ENCODE measurements at regions of chr2 and their contacts with region 1.

Region 1: DNA sequence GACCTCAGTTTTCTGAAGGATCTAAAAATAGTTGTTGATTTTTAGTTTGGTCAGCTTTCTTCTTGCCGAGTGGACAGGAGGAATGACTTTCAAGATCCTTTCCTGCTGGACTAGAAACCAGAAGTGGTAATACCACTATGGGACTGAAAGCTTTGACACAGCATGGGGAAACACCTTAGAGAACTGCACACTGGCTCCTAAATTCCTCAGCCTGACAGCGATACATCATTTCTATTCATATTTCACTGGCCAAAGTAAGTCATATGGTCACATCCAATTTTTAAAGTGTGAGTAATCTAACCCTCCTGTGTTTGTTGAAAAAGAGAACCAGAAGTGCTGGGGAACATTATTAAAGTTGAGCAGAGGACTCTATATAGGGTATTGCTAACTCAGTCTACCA is 244.7 kb upstream of the MMADHC start:
- DNase-seq: peak; percentile 39
- H3K4me3 ChIP-seq: no peak overlapping the region
- H3K27ac ChIP-seq: no peak overlapping the region
- H3K4me1 ChIP-seq: no peaks in the 10 kb centered on the region
- H3K27me3 ChIP-seq: no peaks in the 10 kb centered on the region
- CTCF ChIP-seq: no peak

Region 2: DNA sequence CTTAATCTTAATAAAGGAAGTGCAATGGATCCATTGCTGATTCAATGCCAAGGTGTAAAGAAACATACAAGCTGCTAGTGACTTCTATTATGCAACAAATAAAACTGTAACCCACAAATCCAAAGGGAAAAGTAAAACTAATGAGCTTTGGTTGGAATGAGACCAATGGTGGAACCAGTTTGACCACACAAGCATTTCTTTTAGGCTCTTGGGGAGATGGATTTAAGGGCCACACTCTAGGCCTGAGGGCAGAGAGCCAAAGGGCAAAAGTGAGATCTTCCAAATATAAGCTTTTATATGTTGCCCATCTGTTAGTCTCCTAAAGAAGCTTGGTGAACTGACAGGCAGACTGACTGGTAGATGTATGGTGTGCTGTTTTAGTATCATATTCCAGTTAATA is 203.3 kb before region 1 on chr2:
- CTCF ChIA-PET with region 1: no interaction called
- dilution Hi-C with region 1: loop called (anchors 10 kb)
- in situ Hi-C with region 1: no loop called
- intact Hi-C with region 1: no loop called
- DNase-seq: no peak
- H3K4me3 ChIP-seq: no peak overlapping the region
- H3K27ac ChIP-seq: no peak overlapping the region
- H3K4me1 ChIP-seq: no peaks in the 10 kb centered on the region
- H3K27me3 ChIP-seq: no peaks in the 10 kb centered on the region
- CTCF ChIP-seq: no peak

Region 3: DNA sequence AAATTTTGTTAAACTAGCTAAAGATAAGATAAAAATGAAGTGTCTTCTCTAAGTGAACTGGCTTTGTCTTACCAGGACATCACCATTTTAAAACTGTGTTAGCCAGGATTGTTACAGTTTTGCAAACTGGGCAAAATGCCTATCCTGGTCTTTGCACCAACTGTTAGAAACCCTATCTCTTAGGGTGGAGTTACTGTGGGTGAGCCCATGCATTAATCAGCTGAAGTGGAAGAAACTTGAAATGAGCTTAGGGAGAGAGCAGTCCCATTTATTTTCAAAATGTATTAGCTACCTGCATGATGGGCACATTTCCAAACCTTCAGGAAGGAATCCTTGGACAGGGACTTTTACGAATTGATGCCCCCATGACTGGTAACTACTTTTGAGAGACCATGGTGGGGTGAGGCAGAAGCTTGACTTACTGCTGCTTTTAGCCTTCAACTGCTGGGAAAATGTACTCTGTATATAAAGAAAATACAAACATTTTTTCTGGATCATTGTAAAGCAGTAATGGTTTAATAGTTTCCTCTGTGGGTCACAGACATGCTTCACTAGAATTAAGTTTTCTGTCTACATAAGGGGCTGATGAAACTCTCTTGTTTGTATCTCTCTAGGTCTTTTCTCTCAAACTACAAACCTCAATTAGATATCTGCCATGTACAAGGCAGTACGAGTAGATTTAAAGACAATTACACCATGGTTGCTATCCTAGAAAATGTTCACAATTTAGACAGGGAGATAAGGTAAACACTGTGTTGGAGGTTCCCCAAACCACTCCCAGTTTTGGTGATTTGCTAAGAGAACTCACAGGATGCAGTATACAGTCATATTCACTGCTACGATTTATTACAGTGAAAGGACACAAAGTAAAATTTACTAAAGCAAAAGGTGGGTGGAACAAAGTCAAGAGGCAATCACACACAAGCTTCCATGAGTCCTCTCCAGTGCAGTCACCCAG is 76.7 kb after region 1 on chr2:
- CTCF ChIA-PET with region 1: no interaction called
- dilution Hi-C with region 1: no loop called
- in situ Hi-C with region 1: no loop called
- intact Hi-C with region 1: loop called (anchors 10 kb)
- DNase-seq: no peak
- H3K4me3 ChIP-seq: no peak overlapping the region
- H3K27ac ChIP-seq: no peak overlapping the region
- H3K4me1 ChIP-seq: no peaks in the 10 kb centered on the region
- H3K27me3 ChIP-seq: peaks cover 2% of the 10 kb centered on the region
- CTCF ChIP-seq: no peak